AG04450 (cell line): ENCODE measurements at regions of chr20 and their contacts with region 1.

Region 1: GRCh38 chr20:41339507-41340326 is 904 bp upstream of the LPIN3 start:
- DNase-seq: no peak
- H3K4me3 ChIP-seq: peak overlapping the region; percentile 49
- H3K27ac ChIP-seq: peak overlapping the region; percentile 47
- H3K27me3 ChIP-seq: no peaks in the 10 kb centered on the region
- CTCF ChIP-seq: peak; percentile 94

Region 2: GRCh38 chr20:40970201-40970600 is 369.5 kb before region 1 on chr20:
- CTCF ChIA-PET with region 1: interaction called, 15 read pairs
- POLR2A ChIA-PET with region 1: no interaction called
- DNase-seq: no peak
- H3K4me3 ChIP-seq: no peak overlapping the region
- H3K27ac ChIP-seq: no peak overlapping the region
- H3K27me3 ChIP-seq: no peaks in the 10 kb centered on the region
- CTCF ChIP-seq: peak; percentile 28; the same call in 1 of the 2 replicates

Region 3: GRCh38 chr20:41095110-41095969 is 244.4 kb before region 1 on chr20:
- CTCF ChIA-PET with region 1: no interaction called
- POLR2A ChIA-PET with region 1: no interaction called
- DNase-seq: no peak
- H3K4me3 ChIP-seq: no peak overlapping the region
- H3K27ac ChIP-seq: no peak overlapping the region
- H3K27me3 ChIP-seq: no peaks in the 10 kb centered on the region
- CTCF ChIP-seq: peak; percentile 84

Region 4: DNA sequence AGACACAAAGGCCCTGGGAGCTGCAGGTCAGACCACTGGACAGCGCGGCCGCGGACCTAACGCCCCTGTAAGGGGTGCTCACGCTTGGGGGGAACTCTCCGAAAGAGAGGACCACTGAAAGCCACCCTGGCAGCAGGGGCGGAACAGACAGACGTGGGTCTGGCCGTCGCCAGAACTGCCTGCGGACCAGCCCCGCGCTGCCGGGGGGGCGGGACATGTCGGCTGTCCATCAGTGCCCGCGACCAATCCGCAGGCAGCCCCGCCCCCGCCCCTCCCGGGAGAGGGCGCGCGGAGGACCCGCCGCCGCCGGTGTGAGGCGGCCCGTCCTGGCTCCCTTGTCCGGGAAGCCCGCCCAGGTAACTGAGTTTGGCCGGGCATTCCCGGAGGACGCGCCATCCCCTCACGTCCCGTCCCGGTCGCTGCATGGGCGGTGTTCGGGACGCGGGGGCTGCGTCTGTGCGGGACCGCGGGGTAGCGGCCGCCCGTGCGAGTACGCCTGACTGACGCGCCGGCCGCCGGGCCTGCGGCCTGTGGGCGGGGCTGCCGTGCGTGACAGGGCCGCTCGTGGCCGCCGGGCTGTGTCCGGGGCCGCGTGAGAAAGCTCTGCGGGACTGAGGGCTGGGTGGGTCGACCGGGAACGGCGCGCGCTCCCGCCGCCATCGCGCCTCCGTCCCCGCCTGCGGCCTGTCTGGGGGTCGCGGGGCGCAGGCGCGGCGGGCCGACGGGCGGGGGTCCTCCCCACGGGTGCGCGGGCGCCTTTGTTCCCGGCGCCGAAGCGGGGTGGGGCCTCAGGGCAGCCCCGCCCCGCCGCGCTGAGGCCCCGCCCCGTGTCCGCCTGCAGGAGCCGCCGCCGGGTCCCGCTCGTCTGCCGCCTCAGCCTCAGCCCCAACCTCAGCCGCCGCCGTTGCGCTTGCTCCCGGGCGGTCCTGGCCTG is 202.8 kb before region 1 on chr20 and contains the start of gene PLCG1:
- CTCF ChIA-PET with region 1: interaction called, 13 read pairs
- POLR2A ChIA-PET with region 1: interaction called, 5 read pairs
- DNase-seq: peak; percentile 32
- H3K4me3 ChIP-seq: peak within 1 kb of the TSS; percentile 75
- H3K27ac ChIP-seq: peak within 1 kb of the TSS; percentile 78
- H3K27me3 ChIP-seq: no peaks in the 10 kb centered on the region
- CTCF ChIP-seq: no peak
- polyA plus RNA-seq, gene PLCG1: 54.6 and 71.8 TPM in 2 replicates

Region 5: GRCh38 chr20:41317536-41318270 is 22.0 kb before region 1 on chr20 and contains the start of gene ZHX3:
- CTCF ChIA-PET with region 1: interaction called, 10 read pairs
- POLR2A ChIA-PET with region 1: no interaction called
- DNase-seq: peak; percentile 90
- H3K4me3 ChIP-seq: peak within 1 kb of the TSS; percentile 90
- H3K27ac ChIP-seq: peak within 1 kb of the TSS; percentile 99
- H3K27me3 ChIP-seq: no peaks in the 10 kb centered on the region
- CTCF ChIP-seq: no peak
- polyA plus RNA-seq, gene ZHX3: 24.1 and 29.5 TPM in 2 replicates

Region 6: DNA sequence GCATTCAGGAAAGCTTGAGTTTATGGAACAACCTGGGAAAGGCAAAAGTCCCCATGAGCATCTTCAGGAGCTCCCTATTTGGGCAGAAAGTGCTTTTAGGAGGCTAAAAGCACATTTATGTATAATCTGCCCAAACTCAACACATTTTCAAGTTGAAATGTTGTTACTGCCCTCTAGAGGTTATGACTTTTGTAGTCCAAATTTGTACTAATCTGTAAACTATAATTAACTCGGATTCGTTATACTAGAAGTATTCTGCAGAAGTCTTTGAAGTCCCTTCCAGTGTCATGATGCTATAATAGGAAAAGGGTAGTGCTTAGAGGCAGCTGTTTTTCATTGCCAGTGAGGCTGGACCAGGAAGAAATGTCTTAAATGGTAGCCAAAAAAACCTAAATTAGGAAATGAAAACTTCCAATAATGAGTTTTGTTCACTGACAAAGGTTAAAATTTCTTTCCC is 71.7 kb after region 1 on chr20:
- CTCF ChIA-PET with region 1: interaction called, 30 read pairs
- POLR2A ChIA-PET with region 1: no interaction called
- DNase-seq: no peak
- H3K4me3 ChIP-seq: no peak overlapping the region
- H3K27ac ChIP-seq: no peak overlapping the region
- H3K27me3 ChIP-seq: no peaks in the 10 kb centered on the region
- CTCF ChIP-seq: peak; percentile 55